Left cardiac atrium (tissue), 4 donors: ENCODE measurements at regions of chr3 and their contacts with region 1.

Region 1: DNA sequence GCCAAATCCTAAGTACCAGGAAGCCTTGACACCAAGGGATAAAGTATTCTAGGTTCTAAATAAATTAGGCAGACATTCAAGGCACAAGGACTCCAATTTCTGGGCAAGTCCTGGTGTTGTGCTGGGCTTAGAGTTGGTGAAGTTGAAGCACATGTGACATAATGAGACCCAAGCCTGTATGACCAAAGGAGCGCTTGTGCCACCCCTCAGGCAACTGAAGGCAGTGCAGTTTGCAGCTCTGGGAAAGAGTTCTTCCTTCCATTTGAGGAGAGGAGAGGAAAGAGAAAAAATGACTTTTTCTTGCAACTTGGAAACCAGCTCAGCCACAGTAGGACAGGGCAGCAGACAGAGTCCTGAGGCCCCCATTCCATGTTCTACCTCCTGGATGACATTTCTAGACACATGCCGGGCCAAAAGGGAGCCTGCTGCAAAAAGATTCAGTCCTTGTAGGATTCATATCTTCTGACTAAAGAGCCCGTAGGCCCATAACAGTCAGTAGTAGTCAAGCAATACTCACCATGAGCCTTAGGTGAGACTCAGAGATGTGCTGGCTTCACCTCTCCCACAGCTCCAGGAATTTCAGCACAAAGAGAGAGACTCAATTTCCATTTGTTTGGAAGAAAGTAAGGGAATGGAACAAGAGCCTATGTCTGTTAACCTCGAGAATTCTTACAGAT is 588.8 kb upstream of the BCHE start:
- DNase-seq: no peak
- ATAC-seq: no peak

Region 2: GRCh38 chr3:166478356-166478755 is 52.3 kb after region 1 on chr3:
- intact Hi-C with region 1: loop called in 1 of 2 experiments (anchors 2 kb)
- DNase-seq: no peak
- ATAC-seq: no peak